Ascending aorta (tissue), 2 donors: ENCODE measurements at regions of chr13 and their contacts with region 1.

Region 1: GRCh38 chr13:50911937-50912795 is 2.6 kb downstream of the RNASEH2B start:
- DNase-seq: peak; percentile 65 to 92
- H3K4me3 ChIP-seq: peak overlapping the region in 1 of 2 donors; percentile 90
- H3K27ac ChIP-seq: peak overlapping the region in 1 of 2 donors; percentile 14
- H3K4me1 ChIP-seq: peaks cover 16 to 20% of the 10 kb centered on the region in 2 donors
- H3K27me3 ChIP-seq: no peaks in the 10 kb centered on the region
- CTCF ChIP-seq: peak; percentile 69 to 87 (median 76)

Region 2: DNA sequence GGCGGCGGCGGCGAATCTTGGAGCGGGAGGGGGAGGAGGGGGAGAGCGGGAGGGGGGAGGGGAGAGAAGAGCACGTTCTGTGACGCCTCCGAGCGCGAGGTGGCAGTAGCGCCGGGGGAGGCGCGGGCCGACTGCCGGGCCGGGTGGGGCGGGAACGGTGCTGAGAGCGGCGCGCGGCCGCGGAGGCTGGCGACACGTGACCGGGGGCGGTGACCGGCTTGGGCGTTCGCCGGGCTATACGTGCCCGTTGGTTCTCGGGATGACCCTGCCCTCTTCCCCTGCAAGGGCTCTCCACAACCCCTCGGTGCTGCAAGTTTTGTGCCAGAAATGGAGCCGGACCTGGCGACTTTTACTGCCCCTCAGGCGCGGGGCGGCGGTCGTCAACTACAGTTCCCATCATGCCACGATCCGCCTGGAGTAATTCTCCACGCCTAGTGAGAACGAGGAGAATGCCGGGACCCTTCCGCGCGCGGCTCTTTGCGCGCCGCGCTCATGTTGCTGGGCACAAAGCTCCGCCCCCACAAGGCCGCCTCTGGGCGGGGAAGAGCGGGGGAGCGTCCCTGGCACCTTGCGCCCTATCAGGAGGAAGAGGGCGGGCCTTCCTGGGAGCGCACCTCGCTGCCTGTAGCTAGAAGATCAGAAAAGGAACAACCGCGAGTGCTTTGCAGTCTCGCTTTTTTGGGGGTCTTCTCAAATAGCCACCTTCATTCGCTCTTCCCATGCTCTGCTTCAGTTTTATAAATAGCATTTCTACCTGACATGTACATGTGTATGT is 1119.4 kb before region 1 on chr13 and contains the start of gene KPNA3:
- intact Hi-C with region 1: loop called (anchors 2 kb)
- DNase-seq: peak; percentile 87 to 97
- H3K4me3 ChIP-seq: peak within 1 kb of the TSS; percentile 81 to 100
- H3K27ac ChIP-seq: peak within 1 kb of the TSS; percentile 90 to 99
- H3K4me1 ChIP-seq: peaks cover 0 to 12% of the 10 kb centered on the region in 2 donors
- H3K27me3 ChIP-seq: no peaks in the 10 kb centered on the region
- CTCF ChIP-seq: peak in 2 of 3 experiments; percentile 11 to 16
- total RNA-seq, gene KPNA3: 5.9 TPM

Region 3: DNA sequence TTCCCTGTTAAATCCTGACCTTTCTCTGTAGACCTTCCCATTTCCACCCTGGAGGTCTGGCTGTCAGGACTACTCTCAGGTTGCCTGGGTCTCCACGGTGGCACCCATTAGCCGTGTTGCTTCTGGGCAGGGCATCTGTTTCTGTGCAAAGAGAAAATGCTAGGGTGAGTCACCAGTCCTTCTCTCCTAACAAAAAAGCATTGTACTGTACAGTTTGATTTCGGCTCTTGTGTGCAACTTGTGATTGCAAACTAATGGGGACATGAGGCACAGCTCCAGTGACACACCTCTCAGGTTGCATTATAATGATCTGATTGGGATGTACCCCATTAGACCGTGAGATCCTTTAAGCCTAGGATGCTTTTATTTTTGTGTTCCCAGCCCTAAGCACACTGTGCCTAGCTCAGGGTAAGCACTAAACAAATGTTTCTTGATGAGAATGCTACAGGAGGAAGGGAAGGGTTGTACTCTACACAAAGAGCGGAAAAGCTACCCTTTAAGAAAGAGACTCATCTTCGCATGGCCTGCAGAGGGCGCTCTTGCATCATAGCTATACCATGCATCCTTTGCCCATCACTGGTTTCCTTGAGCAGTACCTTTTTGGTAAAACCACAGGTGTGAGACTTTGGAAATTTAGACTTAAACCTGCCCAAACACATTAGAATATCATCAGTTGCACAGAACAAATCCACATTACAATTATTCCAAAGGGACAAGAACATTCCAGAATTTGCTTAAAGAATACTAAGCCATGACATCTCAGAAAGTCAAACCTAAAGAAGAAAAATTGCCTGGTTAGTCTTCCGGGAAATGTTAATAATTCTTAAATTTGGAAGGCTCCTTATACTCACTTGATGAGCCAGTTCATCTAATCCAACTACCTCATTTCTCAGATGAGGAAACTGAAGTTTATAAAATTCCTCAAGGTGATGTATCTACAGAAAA is 935.6 kb before region 1 on chr13:
- intact Hi-C with region 1: loop called (anchors 2 kb)
- DNase-seq: peak in 1 of 2 donors; percentile 80
- H3K4me3 ChIP-seq: no peak overlapping the region
- H3K27ac ChIP-seq: no peak overlapping the region
- H3K4me1 ChIP-seq: no peaks in the 10 kb centered on the region
- H3K27me3 ChIP-seq: no peaks in the 10 kb centered on the region
- CTCF ChIP-seq: peak; percentile 66 to 84 (median 80)

Region 4: GRCh38 chr13:50123862-50124536 is 788.2 kb before region 1 on chr13:
- intact Hi-C with region 1: loop called (anchors 5 kb)
- DNase-seq: peak; percentile 92 to 98
- H3K4me3 ChIP-seq: peak overlapping the region; percentile 76 to 90
- H3K27ac ChIP-seq: peak overlapping the region; percentile 100
- H3K4me1 ChIP-seq: peaks cover 0 to 20% of the 10 kb centered on the region in 2 donors
- H3K27me3 ChIP-seq: no peaks in the 10 kb centered on the region
- CTCF ChIP-seq: no peak

Region 5: DNA sequence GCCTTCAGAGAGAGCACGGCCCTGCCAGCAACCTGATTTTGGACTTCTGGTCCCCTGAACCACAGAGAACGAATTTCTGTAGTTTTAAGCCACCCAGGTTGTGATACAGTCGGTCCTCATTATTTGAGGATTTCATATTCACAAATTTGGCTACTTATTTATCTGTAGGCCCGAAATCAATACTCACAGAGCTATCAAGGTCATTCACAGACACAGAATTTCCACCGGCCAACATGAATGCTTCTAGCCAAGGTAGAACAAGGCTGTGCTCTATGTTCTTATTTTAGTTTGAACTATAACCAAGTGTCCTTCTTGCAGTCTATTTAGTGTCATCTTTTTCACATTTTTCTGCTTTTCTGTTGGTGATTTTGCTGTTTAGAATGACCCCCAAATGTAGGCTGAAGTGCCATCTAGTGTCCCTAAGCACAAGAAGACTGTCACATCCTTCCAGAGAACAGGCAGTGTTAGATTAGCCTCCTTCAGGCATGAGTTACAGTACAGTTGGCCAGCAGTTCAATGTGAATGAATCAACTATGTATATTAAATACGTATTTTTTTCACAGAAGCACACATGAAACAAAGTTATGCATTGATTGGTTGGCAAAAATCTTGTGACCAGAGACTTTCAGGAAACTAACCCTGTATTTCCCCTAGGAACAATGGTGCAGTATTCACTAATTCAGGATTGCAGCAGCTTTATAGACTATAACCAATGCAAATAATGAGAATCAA is 135.4 kb after region 1 on chr13:
- intact Hi-C with region 1: no loop called
- DNase-seq: no peak
- H3K4me3 ChIP-seq: no peak overlapping the region
- H3K27ac ChIP-seq: no peak overlapping the region
- H3K4me1 ChIP-seq: no peaks in the 10 kb centered on the region
- H3K27me3 ChIP-seq: no peaks in the 10 kb centered on the region
- CTCF ChIP-seq: no peak

Region 6: DNA sequence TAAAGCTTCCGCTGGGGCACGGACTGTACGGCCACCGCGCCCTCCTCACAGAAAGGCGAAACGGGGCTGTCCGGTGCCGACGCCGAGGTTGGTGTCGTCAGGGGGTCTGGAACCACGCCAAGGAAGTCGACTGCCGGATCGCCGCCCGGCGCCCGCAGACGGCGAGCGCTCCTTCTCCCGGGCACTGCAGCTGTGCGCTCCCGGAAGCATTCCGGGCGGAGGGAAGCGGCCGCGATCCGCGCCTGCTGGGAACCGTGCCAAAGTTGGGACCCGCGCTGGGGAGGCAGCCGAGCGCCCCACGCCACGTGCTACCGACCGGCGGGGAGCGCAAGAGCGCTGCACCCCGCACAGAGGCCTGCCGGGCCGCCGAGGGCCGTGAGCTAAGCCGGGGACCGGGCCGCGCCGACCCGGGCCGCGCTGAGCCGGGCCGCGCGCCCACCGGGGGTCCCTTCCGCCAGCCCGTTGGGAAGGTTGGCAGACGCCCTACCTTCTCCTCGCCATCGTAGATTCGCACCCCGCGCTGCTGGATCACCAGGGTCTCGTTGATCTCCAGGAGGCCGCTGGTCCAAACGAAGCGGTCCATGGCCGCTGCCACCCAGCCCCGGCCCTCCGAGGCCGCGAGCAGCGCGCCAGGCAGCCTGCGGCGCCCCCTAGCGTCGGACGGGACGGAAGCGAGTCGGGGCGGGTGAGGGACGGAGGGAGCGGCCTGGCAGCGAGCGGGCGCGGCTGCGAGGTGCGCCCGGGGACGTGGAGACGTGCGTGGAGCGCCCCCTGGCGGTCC is 1538.0 kb after region 1 on chr13 and contains the start of gene VPS36:
- intact Hi-C with region 1: loop called (anchors 10 kb)
- DNase-seq: peak; percentile 66 to 98
- H3K4me3 ChIP-seq: peak within 1 kb of the TSS; percentile 77 to 88
- H3K27ac ChIP-seq: peak within 1 kb of the TSS; percentile 85 to 88
- H3K4me1 ChIP-seq: peaks cover 0 to 5% of the 10 kb centered on the region in 2 donors
- H3K27me3 ChIP-seq: no peaks in the 10 kb centered on the region
- CTCF ChIP-seq: peak; percentile 97 to 99 (median 98)
- total RNA-seq, gene VPS36: 69.3 TPM